ENCODE measurements at regions of chr11 and their contacts with region 1.

Region 1: DNA sequence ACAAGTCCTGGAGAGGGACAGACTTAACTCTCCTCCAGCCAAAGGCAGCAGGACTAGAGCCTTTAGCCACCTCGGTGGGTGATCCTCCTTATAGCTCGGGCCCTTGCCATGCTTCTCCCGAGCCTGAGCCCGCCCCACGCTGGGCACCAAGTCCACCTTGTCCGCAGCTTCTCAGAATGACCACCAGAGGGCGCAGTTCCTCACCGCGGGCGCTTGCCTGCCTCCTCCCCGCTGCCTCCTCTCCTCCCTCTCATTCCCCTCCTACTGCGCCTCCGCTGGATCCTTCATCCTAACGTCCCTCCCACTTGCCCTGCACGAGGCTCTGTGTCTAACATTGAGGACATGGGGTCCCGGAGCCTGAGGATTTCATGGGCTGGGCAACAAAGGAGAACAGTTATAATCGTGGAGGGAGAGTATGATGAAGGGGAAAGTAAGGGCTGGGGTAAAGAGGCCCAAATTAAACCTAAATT is 11.3 kb upstream of the MOGAT2 start:
- DNase-seq: peak; percentile 49 to 86
- H3K4me3 ChIP-seq: no peak overlapping the region
- H3K27ac ChIP-seq: no peak overlapping the region
- H3K4me1 ChIP-seq: no peaks in the 10 kb centered on the region
- H3K27me3 ChIP-seq: no peaks in the 10 kb centered on the region; a peak in 1 of 7 replicates
- CTCF ChIP-seq: peak; percentile 88 to 96 (median 95)
- EP300 ChIP-seq: no peak
- POLR2A ChIP-seq: no peak
- RAD21 ChIP-seq: peak; percentile 69 to 74

Region 2: GRCh38 chr11:75673977-75674582 is 32.2 kb before region 1 on chr11:
- CTCF ChIA-PET with region 1: interaction called, 18 read pairs
- POLR2A ChIA-PET with region 1: no interaction called
- DNase-seq: no peak
- H3K4me3 ChIP-seq: no peak overlapping the region
- H3K27ac ChIP-seq: no peak overlapping the region
- H3K4me1 ChIP-seq: no peaks in the 10 kb centered on the region
- H3K27me3 ChIP-seq: peaks cover 18 to 32% (median 24%) of the 10 kb centered on the region in 4 experiments
- CTCF ChIP-seq: no peak
- EP300 ChIP-seq: no peak
- POLR2A ChIP-seq: no peak
- RAD21 ChIP-seq: no peak

Region 3: DNA sequence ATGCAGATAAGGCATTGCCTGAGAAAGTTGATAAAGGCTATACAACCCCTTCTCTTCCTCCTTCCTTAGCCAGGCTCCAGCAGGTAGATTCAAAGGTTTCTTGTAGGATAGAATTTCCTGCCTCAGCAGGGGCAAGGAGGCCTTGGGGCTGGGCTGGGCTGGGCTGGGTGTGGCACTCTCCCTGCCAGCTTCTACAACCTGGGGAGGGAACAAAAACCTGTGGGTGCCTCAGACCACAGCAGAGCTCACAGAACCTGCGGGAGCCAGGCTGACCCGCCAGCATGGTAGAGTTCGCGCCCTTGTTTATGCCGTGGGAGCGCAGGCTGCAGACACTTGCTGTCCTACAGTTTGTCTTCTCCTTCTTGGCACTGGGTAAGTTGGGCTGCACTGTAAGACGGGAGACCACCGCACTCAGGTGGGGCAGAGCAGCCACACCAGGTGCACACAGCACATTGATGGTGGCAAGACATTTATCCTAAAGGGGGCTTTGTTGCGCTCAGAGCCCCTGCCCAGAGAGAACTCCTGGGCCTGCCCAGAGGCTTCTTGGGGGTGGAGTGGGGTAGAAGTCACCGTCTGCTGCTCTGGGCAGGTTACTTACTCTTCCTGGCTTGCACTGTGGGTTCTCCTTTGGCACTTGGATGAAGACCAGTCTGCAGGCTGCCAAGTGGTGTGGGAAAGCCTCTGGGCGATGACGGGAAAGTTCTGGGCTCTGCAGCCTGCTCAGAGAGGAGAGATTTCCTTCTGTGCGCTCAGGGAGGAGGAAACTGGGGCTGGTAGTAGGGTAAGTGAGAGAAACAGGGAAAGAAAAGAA is 11.5 kb after region 1 on chr11 and contains the start of gene MOGAT2:
- CTCF ChIA-PET with region 1: interaction called, 10 read pairs
- POLR2A ChIA-PET with region 1: interaction called, 4 read pairs
- DNase-seq: no peak
- H3K4me3 ChIP-seq: no peak within 1 kb of the TSS
- H3K27ac ChIP-seq: no peak within 1 kb of the TSS
- H3K4me1 ChIP-seq: peaks cover 0 to 3% (median 0%) of the 10 kb centered on the region in 4 experiments; a peak in 2 of 7 replicates
- H3K27me3 ChIP-seq: peaks cover 0 to 15% (median 4%) of the 10 kb centered on the region in 4 experiments; a peak in 4 of 7 replicates
- CTCF ChIP-seq: no peak
- EP300 ChIP-seq: no peak
- POLR2A ChIP-seq: no peak
- RAD21 ChIP-seq: no peak
- total RNA-seq, gene MOGAT2: not detected in 2 replicates

Region 4: DNA sequence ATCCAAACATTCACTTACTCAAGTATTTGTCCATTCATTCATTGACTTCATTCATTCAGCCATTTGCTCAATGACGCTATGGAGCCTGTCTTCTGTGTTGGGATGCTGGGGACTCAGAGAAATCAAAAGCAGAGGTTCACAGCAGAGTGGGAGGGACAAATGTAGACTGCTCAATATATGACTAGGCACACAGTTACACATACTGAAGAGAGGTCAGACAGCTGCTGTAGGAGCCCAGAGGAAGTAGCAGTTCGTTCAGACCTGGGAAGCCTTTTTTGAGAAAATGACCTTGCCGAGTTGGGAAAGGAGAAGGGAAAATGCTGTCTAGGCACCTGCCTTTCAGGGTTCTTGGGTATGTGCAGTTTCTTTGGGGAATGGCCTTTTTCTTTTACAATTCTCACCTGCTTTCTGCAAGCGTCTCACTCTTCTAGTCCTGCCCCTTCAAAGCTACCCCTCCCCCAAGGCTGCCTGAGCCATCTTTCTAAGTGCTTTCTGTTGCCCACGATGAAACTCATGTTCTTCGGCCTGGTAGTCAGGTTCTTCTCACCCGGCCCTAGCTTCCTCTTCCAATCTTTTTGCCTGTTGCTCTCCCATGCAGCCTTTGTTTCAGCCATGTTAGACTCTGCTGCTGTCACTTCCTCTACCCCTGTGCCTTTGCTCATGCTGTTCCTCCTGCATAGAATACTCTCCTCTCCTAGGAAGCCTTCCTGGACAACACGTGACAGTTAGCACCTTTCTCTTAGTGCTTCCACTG is 104.5 kb after region 1 on chr11:
- CTCF ChIA-PET with region 1: no interaction called
- POLR2A ChIA-PET with region 1: no interaction called
- DNase-seq: no peak
- H3K4me3 ChIP-seq: no peak overlapping the region
- H3K27ac ChIP-seq: no peak overlapping the region
- H3K4me1 ChIP-seq: peaks cover 2 to 12% (median 5%) of the 10 kb centered on the region in 4 experiments; a peak in 5 of 7 replicates
- H3K27me3 ChIP-seq: no peaks in the 10 kb centered on the region
- CTCF ChIP-seq: no peak
- EP300 ChIP-seq: no peak
- POLR2A ChIP-seq: no peak
- RAD21 ChIP-seq: no peak